CD14-positive monocyte (primary cell): ENCODE measurements at regions of chr14 and their contacts with region 1.

Region 1: GRCh38 chr14:24310646-24311604 is at the start of gene LTB4R:
- DNase-seq: peak; percentile 41 to 68 (median 55)
- H3K4me3 ChIP-seq: peak within 1 kb of the TSS; percentile 51 to 84 (median 57)
- H3K4me3 Mint-ChIP-seq: peak within 1 kb of the TSS; percentile 81 to 95
- H3K27ac ChIP-seq: peak within 1 kb of the TSS; percentile 85 to 89
- H3K27ac Mint-ChIP-seq: peak within 1 kb of the TSS; percentile 95 to 99 (median 98)
- H3K4me1 ChIP-seq: peaks cover 78 to 85% of the 10 kb centered on the region in 2 donors
- H3K4me1 Mint-ChIP-seq: peaks cover 81% of the 10 kb centered on the region
- H3K27me3 ChIP-seq: no peaks in the 10 kb centered on the region
- H3K27me3 Mint-ChIP-seq: no peaks in the 10 kb centered on the region
- CTCF ChIP-seq: peak; percentile 45
- polyA plus RNA-seq, gene LTB4R: 51.5 to 98.5 (median 87.3) TPM

Region 2: GRCh38 chr14:24204163-24205146 is 106.5 kb before region 1 on chr14:
- intact Hi-C with region 1: no loop called
- DNase-seq: no peak
- H3K4me3 ChIP-seq: no peak overlapping the region
- H3K4me3 Mint-ChIP-seq: no peak overlapping the region
- H3K27ac ChIP-seq: no peak overlapping the region
- H3K27ac Mint-ChIP-seq: peak overlapping the region in 1 of 7 donors; percentile 15
- H3K4me1 ChIP-seq: no peaks in the 10 kb centered on the region
- H3K4me1 Mint-ChIP-seq: peaks cover 2% of the 10 kb centered on the region
- H3K27me3 ChIP-seq: no peaks in the 10 kb centered on the region
- H3K27me3 Mint-ChIP-seq: no peaks in the 10 kb centered on the region
- CTCF ChIP-seq: no peak

Region 3: GRCh38 chr14:24279301-24280186 is 31.4 kb before region 1 on chr14:
- intact Hi-C with region 1: loop called in 1 of 2 experiments (anchors 5 kb)
- DNase-seq: peak; percentile 52 to 92 (median 57)
- H3K4me3 ChIP-seq: peak overlapping the region in 1 of 3 experiments; percentile 55
- H3K4me3 Mint-ChIP-seq: peak overlapping the region in 1 of 2 donors; percentile 7
- H3K27ac ChIP-seq: peak overlapping the region; percentile 58 to 98
- H3K27ac Mint-ChIP-seq: peak overlapping the region; percentile 91 to 99 (median 95)
- H3K4me1 ChIP-seq: peaks cover 83 to 84% of the 10 kb centered on the region in 2 donors
- H3K4me1 Mint-ChIP-seq: peaks cover 81% of the 10 kb centered on the region
- H3K27me3 ChIP-seq: no peaks in the 10 kb centered on the region
- H3K27me3 Mint-ChIP-seq: peaks cover 0 to 4% (median 3%) of the 10 kb centered on the region in 3 donors
- CTCF ChIP-seq: peak; percentile 46